CD8-positive, alpha-beta T cell (primary cell): ENCODE measurements at regions of chr18 and their contacts with region 1.

Region 1: DNA sequence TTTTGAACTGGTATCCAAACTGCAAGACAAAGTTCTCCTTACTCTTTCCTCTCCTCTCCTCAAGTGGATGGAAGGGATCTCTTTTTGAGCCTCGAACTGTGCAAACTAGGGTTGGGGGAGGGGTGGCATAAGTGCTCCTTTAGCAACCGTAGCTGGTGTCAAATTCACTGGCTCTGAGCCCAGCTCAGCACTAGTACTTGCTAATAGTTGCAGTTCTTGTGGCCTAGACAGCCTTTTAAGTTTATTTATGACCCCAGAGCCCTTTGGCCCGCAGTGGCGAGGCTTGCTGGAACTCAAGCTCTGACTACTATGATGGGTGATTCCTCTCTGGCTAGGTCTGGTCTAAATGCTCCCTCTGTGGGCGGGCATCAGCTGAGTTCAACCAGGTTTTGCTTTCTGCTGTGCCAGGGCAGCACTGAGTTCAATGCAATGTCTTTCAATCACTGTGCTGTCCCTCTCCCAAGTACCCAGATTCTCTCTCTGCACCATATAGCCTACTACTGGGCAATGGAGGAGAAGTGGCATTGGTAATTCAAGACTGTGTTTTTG is 528.4 kb upstream of the SYT4 start:
- DNase-seq: no peak
- ATAC-seq: no peak
- H3K4me3 ChIP-seq: no peak overlapping the region
- H3K4me3 Mint-ChIP-seq: no peak overlapping the region
- H3K27ac ChIP-seq: no peak overlapping the region
- H3K27ac Mint-ChIP-seq: peak overlapping the region; percentile 38
- H3K4me1 ChIP-seq: no peaks in the 10 kb centered on the region
- H3K4me1 Mint-ChIP-seq: no peaks in the 10 kb centered on the region
- H3K27me3 ChIP-seq: no peaks in the 10 kb centered on the region
- H3K27me3 Mint-ChIP-seq: no peaks in the 10 kb centered on the region
- CTCF ChIP-seq: no peak

Region 2: DNA sequence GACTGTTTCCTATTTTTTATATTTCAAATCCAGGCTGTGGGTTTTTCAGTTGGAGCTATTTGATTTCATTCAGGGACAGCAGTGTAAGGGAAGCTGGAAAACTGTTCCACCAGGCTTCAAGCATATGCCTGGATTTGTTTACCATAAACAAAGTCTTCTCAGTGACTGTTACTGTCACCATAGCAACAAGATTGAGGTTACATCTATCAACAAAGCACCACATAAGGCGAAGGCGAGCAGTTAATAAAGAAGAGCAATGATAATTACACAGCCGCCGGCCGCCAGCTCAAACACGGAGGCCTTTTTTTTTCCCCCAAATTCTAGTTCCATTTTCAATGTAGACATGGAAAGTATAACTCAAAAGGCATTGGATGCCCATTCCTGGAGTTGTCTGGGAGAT is 25.2 kb after region 1 on chr18:
- CTCF ChIA-PET with region 1: no interaction called
- POLR2A ChIA-PET with region 1: no interaction called
- intact Hi-C with region 1: loop called in 1 of 2 experiments (anchors 2 kb)
- DNase-seq: no peak
- ATAC-seq: no peak
- H3K4me3 ChIP-seq: no peak overlapping the region
- H3K4me3 Mint-ChIP-seq: no peak overlapping the region
- H3K27ac ChIP-seq: no peak overlapping the region
- H3K27ac Mint-ChIP-seq: no peak overlapping the region
- H3K4me1 ChIP-seq: no peaks in the 10 kb centered on the region
- H3K4me1 Mint-ChIP-seq: no peaks in the 10 kb centered on the region
- H3K27me3 ChIP-seq: no peaks in the 10 kb centered on the region
- H3K27me3 Mint-ChIP-seq: no peaks in the 10 kb centered on the region
- CTCF ChIP-seq: no peak